ENCODE measurements at regions of chr3 and their contacts with region 1.

Region 1: DNA sequence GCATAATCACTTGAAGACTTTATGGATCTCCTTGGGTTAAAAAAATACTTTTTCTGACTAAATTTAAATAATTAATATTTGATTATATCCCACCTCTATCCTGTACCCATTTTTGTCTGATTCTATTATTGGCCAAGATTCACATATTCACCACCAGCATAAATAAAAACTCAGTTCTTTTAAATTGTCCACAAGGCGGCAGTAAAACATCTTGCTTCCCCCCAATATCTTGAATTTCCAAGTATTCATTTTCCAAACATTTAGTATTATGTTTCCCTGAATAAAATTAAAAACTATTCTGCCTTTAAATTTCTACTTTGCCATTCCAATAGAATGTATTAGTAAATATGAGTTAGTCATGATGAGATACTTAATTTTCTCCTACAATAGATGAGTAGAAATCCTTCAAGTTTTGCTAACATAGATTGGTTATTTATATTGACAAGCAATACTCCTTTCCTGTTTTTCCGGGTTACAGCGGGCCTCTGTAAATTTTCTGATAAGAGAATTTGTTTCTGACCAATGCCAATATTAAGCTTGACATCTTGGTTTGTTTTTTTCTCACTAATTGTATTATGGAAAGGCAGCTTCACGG is 218.7 kb upstream of the MDFIC2 start:
- DNase-seq: peak; percentile 3
- H3K4me3 ChIP-seq: no peak overlapping the region
- H3K27ac ChIP-seq: no peak overlapping the region
- H3K4me1 ChIP-seq: no peaks in the 10 kb centered on the region
- H3K27me3 ChIP-seq: peaks cover 11% of the 10 kb centered on the region
- CTCF ChIP-seq: peak; percentile 51 to 55

Region 2: GRCh38 chr3:70120357-70121121 is 410.6 kb before region 1 on chr3:
- CTCF ChIA-PET with region 1: no interaction called
- dilution Hi-C with region 1: no loop called
- in situ Hi-C with region 1: no loop called
- intact Hi-C with region 1: loop called (anchors 5 kb)
- DNase-seq: peak; percentile 48
- H3K4me3 ChIP-seq: no peak overlapping the region
- H3K27ac ChIP-seq: no peak overlapping the region
- H3K4me1 ChIP-seq: no peaks in the 10 kb centered on the region
- H3K27me3 ChIP-seq: no peaks in the 10 kb centered on the region
- CTCF ChIP-seq: peak; percentile 94 to 98

Region 3: DNA sequence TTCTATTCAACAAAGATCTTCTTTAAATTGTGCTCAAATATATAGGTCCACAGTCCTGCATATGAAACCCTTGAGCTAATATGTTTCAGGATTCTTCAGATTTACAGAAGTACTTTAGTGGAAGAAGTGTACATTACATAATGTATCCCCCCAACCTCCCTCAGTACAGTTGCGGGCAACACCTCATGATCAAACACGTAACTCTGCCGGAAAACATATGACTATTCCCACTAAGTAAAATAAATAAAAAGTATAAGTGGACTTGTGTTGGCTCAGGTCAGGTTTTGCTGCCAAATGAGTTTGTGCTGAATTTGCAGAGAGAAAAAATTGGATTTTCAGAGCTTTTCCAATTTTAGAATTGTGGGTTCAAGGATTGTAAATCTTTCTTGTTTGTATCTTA is 48.9 kb after region 1 on chr3:
- CTCF ChIA-PET with region 1: no interaction called
- dilution Hi-C with region 1: no loop called
- in situ Hi-C with region 1: no loop called
- intact Hi-C with region 1: no loop called
- DNase-seq: no peak
- H3K4me3 ChIP-seq: no peak overlapping the region
- H3K27ac ChIP-seq: no peak overlapping the region
- H3K4me1 ChIP-seq: no peaks in the 10 kb centered on the region
- H3K27me3 ChIP-seq: peaks cover 9% of the 10 kb centered on the region
- CTCF ChIP-seq: no peak

Region 4: GRCh38 chr3:71601811-71602210 is 1070.7 kb after region 1 on chr3:
- CTCF ChIA-PET with region 1: no interaction called
- dilution Hi-C with region 1: loop called (anchors 25 kb)
- in situ Hi-C with region 1: no loop called
- intact Hi-C with region 1: no loop called
- DNase-seq: peak; percentile 57
- H3K4me3 ChIP-seq: no peak overlapping the region
- H3K27ac ChIP-seq: no peak overlapping the region
- H3K4me1 ChIP-seq: peaks cover 9% of the 10 kb centered on the region
- H3K27me3 ChIP-seq: no peaks in the 10 kb centered on the region
- CTCF ChIP-seq: no peak

Region 5: GRCh38 chr3:71641674-71642073 is 1110.5 kb after region 1 on chr3:
- CTCF ChIA-PET with region 1: no interaction called
- dilution Hi-C with region 1: no loop called
- in situ Hi-C with region 1: loop called in 1 of 2 experiments (anchors 25 kb)
- intact Hi-C with region 1: no loop called
- DNase-seq: no peak
- H3K4me3 ChIP-seq: no peak overlapping the region
- H3K27ac ChIP-seq: no peak overlapping the region
- H3K4me1 ChIP-seq: no peaks in the 10 kb centered on the region
- H3K27me3 ChIP-seq: no peaks in the 10 kb centered on the region
- CTCF ChIP-seq: no peak

Measured in mammary epithelial cell (primary cell).